ENCODE measurements at regions of chr14 and their contacts with region 1.

Region 1: DNA sequence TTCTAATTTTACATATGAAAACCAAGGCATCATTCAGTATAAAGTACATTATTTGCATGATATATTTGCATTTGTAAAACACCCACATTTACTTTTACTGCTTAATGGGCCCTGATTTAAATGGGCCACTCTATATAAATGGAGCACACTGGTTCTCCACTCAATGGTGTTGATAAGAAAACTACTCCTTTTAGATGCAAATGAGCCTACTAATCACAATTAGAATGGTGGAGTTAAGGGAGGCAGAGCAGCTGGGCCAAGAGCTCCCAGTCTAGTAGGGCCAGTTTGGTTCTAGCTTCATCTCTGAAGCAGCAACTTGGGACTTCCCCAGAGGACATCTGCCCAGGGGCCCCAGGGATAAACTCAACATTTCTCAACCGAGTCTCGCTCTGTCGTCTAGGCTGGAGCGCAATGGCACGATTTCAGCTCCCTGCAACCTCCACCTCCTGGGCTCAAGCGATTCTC is 120.7 kb downstream of the FOXN3 start:
- DNase-seq: no peak
- ATAC-seq: no peak
- H3K4me3 ChIP-seq: no peak overlapping the region
- H3K27ac ChIP-seq: no peak overlapping the region
- H3K4me1 ChIP-seq: peaks cover 6% of the 10 kb centered on the region
- H3K27me3 ChIP-seq: no peaks in the 10 kb centered on the region
- CTCF ChIP-seq: no peak

Region 2: DNA sequence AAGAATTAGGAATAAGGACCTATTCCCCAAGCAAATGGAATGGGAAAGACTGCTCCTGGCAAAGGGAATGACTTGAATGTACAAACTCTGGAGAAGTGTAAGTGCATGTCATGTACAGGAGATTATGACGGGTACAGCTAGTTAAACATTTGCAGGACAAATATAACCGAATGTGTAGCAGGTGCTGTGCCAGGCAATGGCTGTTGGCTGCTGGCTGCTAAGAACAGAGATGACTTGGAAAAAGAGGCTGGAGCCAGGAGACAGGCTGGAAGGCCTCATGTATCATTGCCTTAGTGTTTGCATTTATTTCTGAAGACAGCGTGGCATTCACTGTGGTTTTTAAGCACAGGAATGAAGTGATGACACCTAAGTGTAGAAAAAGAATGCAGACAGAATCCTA is 335.1 kb before region 1 on chr14:
- CTCF ChIA-PET with region 1: no interaction called
- POLR2A ChIA-PET with region 1: no interaction called
- intact Hi-C with region 1: no loop called
- DNase-seq: no peak
- ATAC-seq: no peak
- H3K4me3 ChIP-seq: no peak overlapping the region
- H3K27ac ChIP-seq: no peak overlapping the region
- H3K4me1 ChIP-seq: no peaks in the 10 kb centered on the region
- H3K27me3 ChIP-seq: no peaks in the 10 kb centered on the region
- CTCF ChIP-seq: no peak

Region 3: DNA sequence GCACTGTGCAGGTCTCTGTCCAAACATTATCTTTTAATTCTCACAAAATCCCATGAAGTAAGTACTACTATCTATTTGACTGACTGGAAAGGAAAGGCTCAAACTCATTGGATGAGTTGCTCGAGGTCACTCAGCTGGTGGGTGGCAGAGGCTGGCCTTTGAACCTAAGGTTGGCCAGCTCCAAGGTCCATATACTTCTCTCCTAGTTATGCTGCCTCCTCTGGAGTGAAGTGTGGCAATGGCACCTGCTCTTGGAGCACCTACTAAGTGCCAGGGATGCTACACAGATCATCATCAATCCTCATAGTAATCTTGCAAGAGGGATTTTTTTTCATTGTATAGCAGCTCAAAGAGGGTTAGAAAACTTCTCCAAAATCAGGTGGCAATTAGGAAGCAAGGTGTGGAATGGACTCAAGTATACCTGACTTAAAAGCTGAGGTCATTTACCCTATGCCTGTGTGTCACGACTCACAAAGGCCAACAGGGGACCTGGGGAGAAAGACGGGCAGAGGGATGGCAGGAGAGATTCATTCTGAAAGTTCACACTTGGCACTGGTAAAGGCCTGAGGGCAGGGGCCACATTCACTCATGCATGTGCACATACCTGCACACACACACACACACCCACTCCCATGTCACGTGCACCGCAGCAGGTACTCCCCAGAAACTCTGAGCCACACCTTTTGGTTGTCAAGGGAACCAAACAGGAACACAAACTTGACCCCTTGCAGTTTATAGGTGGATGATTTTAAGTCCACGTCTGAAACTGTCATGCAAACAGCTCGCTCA is 25.7 kb before region 1 on chr14:
- CTCF ChIA-PET with region 1: no interaction called
- POLR2A ChIA-PET with region 1: no interaction called
- intact Hi-C with region 1: loop called (anchors 2 kb)
- DNase-seq: no peak
- ATAC-seq: no peak
- H3K4me3 ChIP-seq: no peak overlapping the region
- H3K27ac ChIP-seq: no peak overlapping the region
- H3K4me1 ChIP-seq: no peaks in the 10 kb centered on the region
- H3K27me3 ChIP-seq: no peaks in the 10 kb centered on the region
- CTCF ChIP-seq: no peak